ENCODE measurements at regions of chr19 and their contacts with region 1.

Region 1: GRCh38 chr19:10332955-10333757 is at the start of gene RAVER1:
- DNase-seq: peak; percentile 62
- ATAC-seq: peak; percentile 89
- H3K4me3 ChIP-seq: peak within 1 kb of the TSS; percentile 78 to 86
- H3K27ac ChIP-seq: peak within 1 kb of the TSS; percentile 87
- H3K4me1 ChIP-seq: peaks cover 10% of the 10 kb centered on the region
- H3K27me3 ChIP-seq: no peaks in the 10 kb centered on the region
- CTCF ChIP-seq: no peak
- total RNA-seq, gene RAVER1: 55.6 TPM

Region 2: GRCh38 chr19:10380313-10381102 is 47.4 kb after region 1 on chr19 and contains the start of gene TYK2:
- CTCF ChIA-PET with region 1: no interaction called
- POLR2A ChIA-PET with region 1: interaction called, 13 read pairs
- in situ Hi-C with region 1: no loop called
- intact Hi-C with region 1: no loop called
- DNase-seq: peak; percentile 94
- ATAC-seq: peak; percentile 98
- H3K4me3 ChIP-seq: peak within 1 kb of the TSS; percentile 94 to 95
- H3K27ac ChIP-seq: peak within 1 kb of the TSS; percentile 93
- H3K4me1 ChIP-seq: peaks cover 3% of the 10 kb centered on the region; the same call in 1 of the 2 replicates
- H3K27me3 ChIP-seq: no peaks in the 10 kb centered on the region
- CTCF ChIP-seq: no peak
- total RNA-seq, gene TYK2: 104 TPM